ENCODE measurements at regions of chr15 and their contacts with region 1.

Region 1: GRCh38 chr15:58115692-58116091 is 22.5 kb upstream of the AQP9 start:
- DNase-seq: no peak
- ATAC-seq: peak; percentile 62 to 79 (median 68)
- H3K4me3 ChIP-seq: no peak overlapping the region
- H3K27ac ChIP-seq: no peak overlapping the region
- H3K4me1 ChIP-seq: peaks cover 0 to 54% (median 23%) of the 10 kb centered on the region in 4 donors
- H3K27me3 ChIP-seq: no peaks in the 10 kb centered on the region
- CTCF ChIP-seq: peak; percentile 39 to 65 (median 50)
- POLR2A ChIP-seq: no peak

Region 2: DNA sequence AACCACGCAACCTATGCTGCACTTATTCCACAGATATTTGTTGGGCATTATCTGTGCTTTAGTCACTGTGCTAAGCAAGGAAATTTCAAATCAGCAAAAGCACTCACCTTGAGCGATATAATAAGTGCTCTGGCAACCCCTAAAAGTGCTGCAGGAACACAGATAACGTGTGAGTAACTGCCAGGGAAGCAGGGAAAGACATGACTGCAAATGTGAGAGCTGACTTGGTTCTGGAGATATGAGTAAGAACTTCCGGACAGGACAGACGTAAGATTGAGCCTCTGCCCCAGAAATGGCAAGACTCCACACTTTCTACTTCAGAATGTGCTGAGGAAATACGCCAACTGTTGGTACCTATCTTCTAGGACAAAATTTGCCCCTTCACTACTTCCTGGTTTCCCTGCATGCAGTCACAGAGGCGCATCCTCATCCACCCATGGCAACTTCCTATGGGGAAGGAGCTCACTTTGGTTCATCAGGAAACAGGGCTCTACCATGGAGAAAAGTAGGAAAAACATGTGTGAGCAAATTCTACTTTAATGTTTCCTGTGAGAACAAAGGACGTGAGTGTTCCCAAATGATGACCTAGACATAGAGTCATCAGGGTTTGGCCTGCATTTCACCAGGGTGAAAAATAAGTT is 64.2 kb after region 1 on chr15:
- intact Hi-C with region 1: loop called in 1 of 2 experiments (anchors 10 kb)
- DNase-seq: no peak
- ATAC-seq: no peak
- H3K4me3 ChIP-seq: no peak overlapping the region
- H3K27ac ChIP-seq: no peak overlapping the region
- H3K4me1 ChIP-seq: no peaks in the 10 kb centered on the region
- H3K27me3 ChIP-seq: no peaks in the 10 kb centered on the region
- CTCF ChIP-seq: no peak
- POLR2A ChIP-seq: no peak